ENCODE measurements at regions of chr11 and their contacts with region 1.

Region 1: GRCh38 chr11:106076919-106077608 is at the start of gene KBTBD3:
- DNase-seq: peak; percentile 99
- H3K4me3 Mint-ChIP-seq: peak within 1 kb of the TSS; percentile 88
- H3K27ac Mint-ChIP-seq: peak within 1 kb of the TSS; percentile 97
- H3K4me1 Mint-ChIP-seq: peaks cover 33% of the 10 kb centered on the region
- H3K27me3 Mint-ChIP-seq: no peaks in the 10 kb centered on the region
- CTCF ChIP-seq: no peak
- total RNA-seq, gene KBTBD3: 2.9 and 5.1 TPM in 2 replicates

Region 2: DNA sequence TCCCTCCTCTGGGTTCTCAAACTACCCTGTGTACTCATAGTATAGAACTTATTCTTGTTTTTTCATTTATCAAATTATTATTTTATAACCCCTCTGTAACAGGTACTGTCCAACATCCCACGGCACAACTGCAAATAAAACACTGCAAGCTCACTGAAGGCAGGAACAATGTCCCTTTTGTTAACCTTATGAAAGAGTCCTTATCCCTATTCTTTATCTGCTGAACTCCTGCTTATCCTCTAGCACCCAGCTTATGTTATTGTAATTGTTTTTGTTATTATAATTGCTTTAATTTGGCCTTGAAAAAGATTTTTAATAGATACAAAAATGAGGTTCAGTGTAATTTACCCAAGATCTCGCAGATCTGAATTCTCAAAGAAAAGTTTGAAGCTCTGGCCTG is 185.4 kb before region 1 on chr11:
- CTCF ChIA-PET with region 1: no interaction called
- POLR2A ChIA-PET with region 1: no interaction called
- intact Hi-C with region 1: no loop called
- DNase-seq: no peak
- H3K4me3 Mint-ChIP-seq: no peak overlapping the region
- H3K27ac Mint-ChIP-seq: no peak overlapping the region
- H3K4me1 Mint-ChIP-seq: no peaks in the 10 kb centered on the region
- H3K27me3 Mint-ChIP-seq: no peaks in the 10 kb centered on the region
- CTCF ChIP-seq: no peak

Region 3: DNA sequence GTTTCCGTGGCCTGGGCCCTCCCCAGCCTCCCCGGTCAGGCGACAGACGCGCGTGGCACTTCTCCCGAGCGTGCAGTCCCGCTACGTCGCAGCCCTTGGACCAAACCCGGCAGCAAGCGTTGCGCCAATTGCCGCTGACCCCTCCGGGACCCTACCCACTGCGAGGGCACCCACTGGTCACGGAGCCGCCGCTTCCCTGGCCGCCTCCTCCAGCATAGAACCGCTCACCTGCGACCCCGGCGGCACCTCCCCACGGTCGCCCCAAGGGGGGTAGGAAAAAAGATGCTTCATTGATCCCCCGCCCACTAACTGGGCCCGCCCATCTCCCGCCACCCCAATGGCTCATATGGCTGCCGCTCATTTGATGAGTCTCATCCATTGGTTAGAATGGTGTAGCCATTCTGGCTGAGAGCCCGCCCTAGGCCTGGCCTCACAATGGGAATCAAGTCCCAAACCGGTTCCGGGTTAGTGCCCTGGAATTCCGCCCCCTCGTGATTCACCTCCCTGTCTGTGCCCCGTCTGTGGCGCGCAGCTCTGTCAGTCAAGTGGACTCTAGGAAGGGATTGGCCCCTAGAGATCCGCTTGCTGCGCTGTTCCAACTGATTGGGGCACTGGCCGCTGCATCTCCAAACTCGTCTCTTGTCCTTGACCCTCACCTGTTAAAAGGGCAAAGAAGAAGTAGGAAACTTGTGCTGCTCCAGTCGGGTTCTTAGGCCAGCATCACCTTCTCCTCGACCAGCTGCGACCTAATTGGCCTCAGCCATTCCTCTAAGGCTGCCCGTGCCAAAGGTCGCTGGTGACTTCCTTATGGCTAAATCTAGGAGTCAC is 54.9 kb before region 1 on chr11 and contains the start of gene MSANTD4:
- CTCF ChIA-PET with region 1: interaction called, 3 read pairs
- POLR2A ChIA-PET with region 1: interaction called, 20 read pairs
- intact Hi-C with region 1: loop called (anchors 1 kb)
- DNase-seq: peak; percentile 100
- H3K4me3 Mint-ChIP-seq: peak within 1 kb of the TSS; percentile 96
- H3K27ac Mint-ChIP-seq: peak within 1 kb of the TSS; percentile 75
- H3K4me1 Mint-ChIP-seq: peaks cover 42% of the 10 kb centered on the region
- H3K27me3 Mint-ChIP-seq: no peaks in the 10 kb centered on the region
- CTCF ChIP-seq: no peak
- total RNA-seq, gene MSANTD4: 31.2 and 36.0 TPM in 2 replicates

Region 4: GRCh38 chr11:106031202-106031810 is 45.8 kb before region 1 on chr11:
- CTCF ChIA-PET with region 1: no interaction called
- POLR2A ChIA-PET with region 1: interaction called, 28 read pairs
- intact Hi-C with region 1: no loop called
- DNase-seq: peak; percentile 28
- H3K4me3 Mint-ChIP-seq: no peak overlapping the region
- H3K27ac Mint-ChIP-seq: peak overlapping the region; percentile 80
- H3K4me1 Mint-ChIP-seq: peaks cover 7% of the 10 kb centered on the region
- H3K27me3 Mint-ChIP-seq: no peaks in the 10 kb centered on the region
- CTCF ChIP-seq: no peak

Region 5: DNA sequence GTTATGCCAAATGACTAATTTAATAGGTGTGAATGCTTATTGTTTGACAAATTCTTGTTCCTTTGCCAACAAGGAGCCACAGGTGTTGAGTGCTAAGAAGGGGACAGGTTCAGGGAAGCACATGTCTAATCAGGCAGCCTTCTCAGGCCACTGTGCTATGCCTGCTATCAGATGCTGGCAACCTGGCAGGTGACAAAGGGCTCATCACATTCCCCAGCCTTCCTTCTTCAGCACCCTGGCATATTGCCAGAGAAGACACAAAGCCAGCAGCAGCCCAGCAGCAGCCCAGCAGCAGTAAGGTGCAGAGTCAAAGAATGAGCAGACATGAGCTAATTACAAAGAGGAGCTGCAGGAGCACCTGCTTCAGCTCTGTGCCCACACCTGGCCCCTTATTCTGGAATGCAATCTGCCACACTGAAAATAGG is 873.0 kb after region 1 on chr11:
- CTCF ChIA-PET with region 1: no interaction called
- POLR2A ChIA-PET with region 1: no interaction called
- intact Hi-C with region 1: no loop called
- DNase-seq: peak; percentile 79
- H3K4me3 Mint-ChIP-seq: no peak overlapping the region
- H3K27ac Mint-ChIP-seq: no peak overlapping the region
- H3K4me1 Mint-ChIP-seq: peaks cover 11% of the 10 kb centered on the region
- H3K27me3 Mint-ChIP-seq: no peaks in the 10 kb centered on the region
- CTCF ChIP-seq: no peak